ENCODE measurements at regions of chr3 and their contacts with region 1.

Region 1: DNA sequence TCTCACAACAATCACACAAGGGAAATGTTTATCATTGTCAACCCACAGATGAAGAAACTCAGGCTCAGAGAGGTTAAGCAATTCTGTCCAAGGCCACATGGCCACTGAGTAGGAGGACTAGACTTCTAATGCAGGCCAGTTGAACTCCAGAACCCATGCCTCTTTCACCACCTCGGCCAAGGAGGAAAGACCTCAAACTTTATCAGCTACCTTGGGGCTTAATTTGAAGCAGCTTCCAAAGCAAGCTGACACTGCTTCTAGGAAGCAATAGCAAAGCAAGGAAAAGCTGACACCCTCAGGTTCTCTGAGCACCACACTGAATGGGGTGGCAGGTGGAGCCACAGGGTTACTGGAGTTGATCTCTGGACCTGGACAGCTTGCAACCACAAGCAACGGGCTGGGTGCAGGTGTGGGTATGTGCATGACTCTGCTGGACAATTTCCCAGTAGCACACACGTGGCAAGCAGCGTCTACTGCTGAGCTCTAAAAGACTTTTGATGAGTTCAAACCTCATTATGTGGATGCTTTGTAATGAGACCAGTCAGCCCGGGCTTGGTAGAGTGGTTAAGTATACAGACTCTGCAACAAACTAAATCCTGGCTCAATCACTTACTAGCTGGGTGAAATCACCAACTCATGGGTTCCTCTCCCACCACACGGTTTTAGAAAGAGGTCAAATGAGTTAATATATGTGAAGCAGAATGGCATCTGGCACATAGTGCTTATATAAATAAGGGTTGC is 23.1 kb downstream of the CCNL1 start:
- DNase-seq: no peak
- H3K4me3 ChIP-seq: no peak overlapping the region
- H3K27ac ChIP-seq: peak overlapping the region; percentile 13
- H3K27me3 ChIP-seq: no peaks in the 10 kb centered on the region
- CTCF ChIP-seq: no peak

Region 2: DNA sequence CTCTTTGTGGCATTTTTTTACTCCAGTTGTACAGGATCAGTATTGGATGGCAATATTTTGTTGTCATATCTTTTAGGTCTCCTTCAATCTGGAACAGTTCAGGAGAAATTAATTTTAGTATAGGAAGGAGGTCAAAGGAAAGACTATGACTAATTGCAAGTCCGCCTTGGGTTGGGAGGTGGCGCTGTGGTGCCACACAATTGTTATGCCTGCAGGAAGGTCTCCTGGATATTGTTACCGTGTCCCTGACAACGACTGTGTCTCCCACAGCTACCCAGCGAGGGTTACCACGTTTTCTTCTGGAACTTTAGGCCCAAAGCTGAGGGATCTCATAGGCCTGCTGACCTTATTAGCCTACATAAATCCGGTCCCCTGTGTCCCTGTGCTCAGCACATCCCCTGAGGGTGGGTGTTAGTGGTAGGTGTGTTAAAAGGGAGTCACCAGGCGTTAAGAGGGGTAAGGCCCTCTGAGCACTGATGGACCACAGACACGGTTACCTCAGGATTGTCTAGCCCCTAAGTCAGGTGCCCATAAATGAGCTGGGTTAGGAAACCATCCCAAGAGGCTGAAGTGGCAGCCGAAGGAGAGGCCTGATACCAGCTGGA is 984.9 kb before region 1 on chr3:
- CTCF ChIA-PET with region 1: interaction called, 42 read pairs
- POLR2A ChIA-PET with region 1: no interaction called
- DNase-seq: peak; percentile 16
- H3K4me3 ChIP-seq: no peak overlapping the region
- H3K27ac ChIP-seq: no peak overlapping the region
- H3K27me3 ChIP-seq: no peaks in the 10 kb centered on the region
- CTCF ChIP-seq: peak; percentile 78

Region 3: GRCh38 chr3:156535162-156535627 is 601.6 kb before region 1 on chr3:
- CTCF ChIA-PET with region 1: interaction called, 19 read pairs
- POLR2A ChIA-PET with region 1: no interaction called
- DNase-seq: peak; percentile 98
- H3K4me3 ChIP-seq: no peak overlapping the region
- H3K27ac ChIP-seq: peak overlapping the region; percentile 93
- H3K27me3 ChIP-seq: no peaks in the 10 kb centered on the region
- CTCF ChIP-seq: peak; percentile 31; the same call in 1 of the 2 replicates

Region 4: GRCh38 chr3:157023226-157023625 is 113.6 kb before region 1 on chr3:
- CTCF ChIA-PET with region 1: no interaction called
- POLR2A ChIA-PET with region 1: interaction called, 11 read pairs
- DNase-seq: no peak
- H3K4me3 ChIP-seq: no peak overlapping the region
- H3K27ac ChIP-seq: no peak overlapping the region
- H3K27me3 ChIP-seq: no peaks in the 10 kb centered on the region
- CTCF ChIP-seq: no peak

Region 5: DNA sequence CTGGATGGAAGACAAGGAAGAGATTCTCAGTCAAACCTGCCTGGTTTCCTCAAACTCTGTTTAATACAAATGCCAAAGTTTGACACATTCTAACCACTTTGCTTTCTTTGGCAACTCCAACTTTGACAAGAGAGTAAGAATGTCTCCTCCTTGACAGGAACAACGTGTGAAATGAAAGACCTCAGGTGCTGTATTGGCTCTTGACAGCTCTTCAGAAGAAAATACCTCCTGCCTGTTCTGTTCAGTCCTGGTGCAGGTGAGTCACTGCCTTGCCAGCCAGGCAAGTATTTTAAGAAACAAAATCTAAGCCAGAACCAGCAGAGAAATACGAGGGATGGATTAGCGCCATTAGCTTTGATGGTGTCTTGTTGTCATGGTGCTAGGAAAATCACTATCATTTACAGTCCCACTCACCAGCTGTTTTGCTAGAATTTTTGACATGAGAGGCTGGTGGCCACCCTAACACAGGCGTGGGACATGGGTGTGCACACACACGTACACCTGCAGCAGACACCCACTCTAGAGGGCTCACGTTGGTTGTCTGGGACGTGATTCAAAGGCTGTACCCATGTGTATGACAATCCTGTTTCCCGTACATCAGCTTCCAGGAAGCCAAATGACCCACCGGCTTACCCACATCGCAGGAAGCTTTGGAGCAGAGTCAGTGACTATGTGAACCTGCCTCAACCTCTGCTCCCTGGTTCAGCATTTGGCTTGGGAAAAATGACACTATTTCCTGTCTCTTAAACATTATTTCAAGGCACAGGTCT is 37.3 kb before region 1 on chr3:
- CTCF ChIA-PET with region 1: interaction called, 18 read pairs
- POLR2A ChIA-PET with region 1: no interaction called
- DNase-seq: no peak
- H3K4me3 ChIP-seq: no peak overlapping the region
- H3K27ac ChIP-seq: no peak overlapping the region
- H3K27me3 ChIP-seq: no peaks in the 10 kb centered on the region
- CTCF ChIP-seq: no peak

Region 6: GRCh38 chr3:157159762-157160657 is 23.2 kb after region 1 on chr3 and contains the start of gene CCNL1:
- CTCF ChIA-PET with region 1: interaction called, 14 read pairs
- POLR2A ChIA-PET with region 1: no interaction called
- DNase-seq: peak; percentile 96
- H3K4me3 ChIP-seq: peak within 1 kb of the TSS; percentile 94
- H3K27ac ChIP-seq: peak within 1 kb of the TSS; percentile 100
- H3K27me3 ChIP-seq: no peaks in the 10 kb centered on the region
- CTCF ChIP-seq: no peak
- polyA plus RNA-seq, gene CCNL1: 113 and 145 TPM in 2 replicates

Measured in AG04450 (cell line).